ENCODE measurements at regions of chr12 and their contacts with region 1.

Region 1: GRCh38 chr12:57817261-57817989 is 1.1 kb downstream of the AVIL start:
- DNase-seq: no peak
- ATAC-seq: no peak
- H3K4me3 Mint-ChIP-seq: no peak overlapping the region
- H3K27ac Mint-ChIP-seq: no peak overlapping the region
- H3K4me1 Mint-ChIP-seq: no peaks in the 10 kb centered on the region
- H3K27me3 Mint-ChIP-seq: no peaks in the 10 kb centered on the region

Region 2: GRCh38 chr12:57803319-57803893 is 14.0 kb before region 1 on chr12:
- CTCF ChIA-PET with region 1: interaction called, 11 read pairs
- POLR2A ChIA-PET with region 1: no interaction called
- intact Hi-C with region 1: no loop called
- DNase-seq: peak; percentile 60
- ATAC-seq: peak; percentile 70
- H3K4me3 Mint-ChIP-seq: no peak overlapping the region
- H3K27ac Mint-ChIP-seq: no peak overlapping the region
- H3K4me1 Mint-ChIP-seq: no peaks in the 10 kb centered on the region
- H3K27me3 Mint-ChIP-seq: no peaks in the 10 kb centered on the region

Measured in activated CD4-positive, alpha-beta T cell treated with anti-CD3 and anti-CD28 coated beads for 36 hours (primary cell).